Activated T-helper 2 cell treated with anti-CD3 and anti-CD28 coated beads, Interferon-gamma antibody, Interleukin-2, Interleukin-4, amounts not matched to agents 10 μg/mL and 5 μg/mL and 100 μg/mL, durations not matched to agents 14 hours and 24 hours and 36 hours (primary cell): ENCODE measurements at regions of chr2 and their contacts with region 1.

Region 1: DNA sequence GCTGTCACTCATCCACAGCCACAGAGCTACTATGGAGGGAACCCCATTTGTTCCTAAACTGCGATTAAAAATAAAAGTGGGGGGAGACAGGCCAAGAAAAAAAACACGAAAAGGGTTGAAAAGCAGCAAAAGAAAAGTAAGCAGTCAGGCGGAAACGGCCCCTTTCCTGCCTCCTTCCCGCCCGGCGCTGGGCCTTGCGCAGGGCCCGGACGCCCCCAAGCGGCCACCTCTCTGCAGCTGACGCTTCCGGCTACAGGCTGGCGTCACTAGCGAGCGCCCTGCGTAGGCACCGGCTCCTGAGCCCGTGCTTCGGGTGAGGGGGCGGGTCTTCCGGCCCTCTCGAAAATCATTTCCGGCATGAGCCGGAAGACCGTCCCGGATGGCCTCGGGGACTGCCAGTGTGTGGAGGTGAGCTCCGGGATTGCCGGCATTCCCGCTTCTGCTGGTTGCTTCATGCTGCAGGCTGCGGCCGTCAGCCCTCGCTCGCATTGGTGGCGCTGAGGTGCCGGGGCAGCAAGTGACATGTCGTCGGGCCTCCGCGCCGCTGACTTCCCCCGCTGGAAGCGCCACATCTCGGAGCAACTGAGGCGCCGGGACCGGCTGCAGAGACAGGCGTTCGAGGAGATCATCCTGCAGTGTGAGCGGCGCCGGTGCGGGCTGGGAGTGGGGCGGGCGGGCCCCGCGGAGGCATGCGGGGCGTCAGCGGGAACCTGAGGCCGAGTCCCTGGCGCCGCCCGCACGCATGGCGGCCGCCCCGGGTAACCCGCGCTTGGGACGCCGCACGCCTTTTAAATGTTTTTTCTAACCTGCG is at the start of gene ATG16L1:
- DNase-seq: peak; percentile 94
- H3K4me3 Mint-ChIP-seq: peak within 1 kb of the TSS; percentile 92
- H3K27ac Mint-ChIP-seq: peak within 1 kb of the TSS; percentile 95
- H3K4me1 Mint-ChIP-seq: peaks cover 54% of the 10 kb centered on the region
- H3K27me3 Mint-ChIP-seq: no peaks in the 10 kb centered on the region
- total RNA-seq, gene ATG16L1: 33.5 and 35.5 TPM in 2 replicates

Region 2: GRCh38 chr2:232488097-232488711 is 763.3 kb before region 1 on chr2:
- intact Hi-C with region 1: no loop called
- DNase-seq: no peak
- H3K4me3 Mint-ChIP-seq: no peak overlapping the region
- H3K27ac Mint-ChIP-seq: no peak overlapping the region
- H3K4me1 Mint-ChIP-seq: no peaks in the 10 kb centered on the region
- H3K27me3 Mint-ChIP-seq: peaks cover 38% of the 10 kb centered on the region

Region 3: DNA sequence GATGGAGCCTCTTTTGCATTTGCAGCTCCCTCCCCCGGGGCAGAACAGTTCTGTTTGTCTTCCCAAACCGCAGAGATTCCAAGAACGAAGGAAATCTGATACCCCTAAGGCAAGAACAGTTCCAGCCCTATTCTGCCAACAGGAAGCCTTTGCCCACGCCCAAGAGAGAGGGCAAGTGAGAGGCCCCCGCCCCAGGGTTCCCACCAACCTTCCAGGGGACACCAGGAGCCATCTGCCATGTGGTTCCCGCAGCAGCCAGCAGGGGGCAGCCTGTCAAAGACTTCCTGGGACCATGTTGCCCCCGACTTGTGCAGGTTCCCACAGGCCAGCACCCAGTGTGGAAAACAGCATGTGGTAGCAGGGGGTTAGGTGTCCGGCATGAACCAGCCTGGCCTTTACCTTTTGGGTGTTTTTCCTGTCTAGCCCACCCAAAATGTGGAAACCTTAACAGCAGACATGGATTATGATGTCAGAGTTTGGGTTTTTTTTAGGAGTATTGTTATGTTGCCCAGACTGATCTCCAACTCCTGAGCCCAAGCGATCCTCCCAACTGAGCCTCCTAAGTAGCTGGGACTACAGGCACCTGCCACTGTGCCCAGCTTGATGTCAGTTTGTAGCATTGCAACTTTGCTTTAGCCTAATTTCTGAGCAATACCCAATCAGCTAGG is 639.8 kb before region 1 on chr2:
- intact Hi-C with region 1: loop called (anchors 5 kb)
- DNase-seq: peak; percentile 48
- H3K4me3 Mint-ChIP-seq: no peak overlapping the region
- H3K27ac Mint-ChIP-seq: no peak overlapping the region
- H3K4me1 Mint-ChIP-seq: no peaks in the 10 kb centered on the region
- H3K27me3 Mint-ChIP-seq: no peaks in the 10 kb centered on the region

Region 4: DNA sequence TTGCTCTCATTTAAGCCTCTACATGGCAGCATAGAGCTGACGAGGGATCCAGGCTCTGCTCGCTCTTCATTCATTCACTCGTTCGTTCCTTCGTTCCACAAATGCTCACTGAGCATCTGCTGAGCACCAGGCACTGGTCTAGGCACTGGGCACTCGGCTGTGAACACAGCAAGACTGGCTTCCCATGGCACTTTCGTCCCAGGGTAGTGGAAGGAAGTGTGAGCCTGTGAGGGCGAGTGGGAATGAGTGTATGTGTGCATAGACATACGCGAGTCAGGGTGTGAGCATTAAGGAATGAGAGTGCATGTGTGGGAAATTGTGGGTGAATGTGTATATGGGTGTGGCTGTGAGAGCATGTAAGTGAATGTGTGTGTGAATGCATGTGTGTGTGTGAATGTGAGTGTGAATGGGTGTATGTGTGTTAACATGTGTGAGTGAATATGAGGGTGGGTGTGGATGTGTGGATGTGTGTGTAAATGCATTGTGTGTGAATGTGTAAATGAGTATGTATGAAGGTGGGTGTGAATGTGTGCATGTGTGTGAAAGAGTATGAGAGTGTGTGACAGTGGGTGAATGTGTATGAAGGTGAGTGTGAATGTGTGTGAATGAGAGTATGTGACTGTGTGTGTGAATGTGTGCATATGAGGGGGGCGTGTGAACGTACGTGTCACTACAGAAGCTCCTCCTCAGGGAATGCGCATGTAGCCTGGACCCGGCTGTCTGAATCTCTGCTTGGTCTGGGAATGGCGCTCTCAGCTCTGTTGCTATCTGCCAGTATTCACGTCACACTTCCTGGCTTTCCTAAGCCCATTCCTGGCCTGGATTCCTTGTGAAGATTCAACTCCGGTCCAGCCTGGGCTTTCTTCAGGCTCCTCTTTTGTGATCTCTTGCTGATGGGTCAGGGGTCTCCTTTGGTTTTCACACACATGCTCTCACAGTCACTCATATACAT is 352.6 kb before region 1 on chr2:
- intact Hi-C with region 1: loop called (anchors 5 kb)
- DNase-seq: no peak
- H3K4me3 Mint-ChIP-seq: no peak overlapping the region
- H3K27ac Mint-ChIP-seq: no peak overlapping the region
- H3K4me1 Mint-ChIP-seq: peaks cover 12% of the 10 kb centered on the region
- H3K27me3 Mint-ChIP-seq: no peaks in the 10 kb centered on the region

Region 5: GRCh38 chr2:232910376-232910775 is 341.1 kb before region 1 on chr2:
- intact Hi-C with region 1: no loop called
- DNase-seq: no peak
- H3K4me3 Mint-ChIP-seq: no peak overlapping the region
- H3K27ac Mint-ChIP-seq: no peak overlapping the region
- H3K4me1 Mint-ChIP-seq: no peaks in the 10 kb centered on the region
- H3K27me3 Mint-ChIP-seq: peaks cover 26% of the 10 kb centered on the region

Region 6: DNA sequence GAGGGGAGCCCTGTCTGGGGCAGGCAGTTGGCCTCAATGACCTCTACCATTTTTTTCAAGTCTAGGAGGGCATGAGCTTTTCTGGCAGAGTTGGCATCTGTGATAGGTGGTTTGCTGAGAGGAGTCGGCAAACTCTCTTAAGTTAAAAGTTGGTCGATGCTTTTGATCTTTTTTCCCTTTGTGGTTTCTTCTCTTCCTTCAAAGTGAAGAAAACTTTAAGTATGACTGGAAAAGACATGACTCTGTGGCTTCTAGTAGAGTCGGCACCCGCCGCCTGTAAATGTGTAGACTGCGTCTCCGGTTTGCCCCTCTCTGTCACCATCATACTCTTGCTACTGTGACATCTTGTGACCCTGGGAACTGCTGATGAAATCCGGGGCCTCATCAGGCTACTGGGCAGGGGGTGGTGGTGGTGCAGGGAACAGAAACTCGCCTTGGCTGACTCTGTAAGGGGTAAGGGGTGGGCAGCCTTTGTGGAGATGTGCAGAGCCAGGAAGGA is 170.2 kb before region 1 on chr2:
- intact Hi-C with region 1: loop called (anchors 1 kb)
- DNase-seq: peak; percentile 58
- H3K4me3 Mint-ChIP-seq: peak overlapping the region; percentile 55
- H3K27ac Mint-ChIP-seq: peak overlapping the region; percentile 82
- H3K4me1 Mint-ChIP-seq: peaks cover 70% of the 10 kb centered on the region
- H3K27me3 Mint-ChIP-seq: no peaks in the 10 kb centered on the region

Region 7: GRCh38 chr2:233267516-233268245 is 16.2 kb after region 1 on chr2:
- intact Hi-C with region 1: loop called (anchors 1 kb)
- DNase-seq: peak; percentile 84
- H3K4me3 Mint-ChIP-seq: peak overlapping the region; percentile 66
- H3K27ac Mint-ChIP-seq: peak overlapping the region; percentile 93
- H3K4me1 Mint-ChIP-seq: peaks cover 61% of the 10 kb centered on the region
- H3K27me3 Mint-ChIP-seq: no peaks in the 10 kb centered on the region